ENCODE measurements at regions of chr13 and their contacts with region 1.

Region 1: GRCh38 chr13:75694722-75695121 is 58.6 kb downstream of the LMO7 start:
- DNase-seq: no peak
- H3K4me3 Mint-ChIP-seq: no peak overlapping the region
- H3K27ac Mint-ChIP-seq: no peak overlapping the region
- H3K4me1 Mint-ChIP-seq: peaks cover 2% of the 10 kb centered on the region
- H3K27me3 Mint-ChIP-seq: no peaks in the 10 kb centered on the region

Region 2: DNA sequence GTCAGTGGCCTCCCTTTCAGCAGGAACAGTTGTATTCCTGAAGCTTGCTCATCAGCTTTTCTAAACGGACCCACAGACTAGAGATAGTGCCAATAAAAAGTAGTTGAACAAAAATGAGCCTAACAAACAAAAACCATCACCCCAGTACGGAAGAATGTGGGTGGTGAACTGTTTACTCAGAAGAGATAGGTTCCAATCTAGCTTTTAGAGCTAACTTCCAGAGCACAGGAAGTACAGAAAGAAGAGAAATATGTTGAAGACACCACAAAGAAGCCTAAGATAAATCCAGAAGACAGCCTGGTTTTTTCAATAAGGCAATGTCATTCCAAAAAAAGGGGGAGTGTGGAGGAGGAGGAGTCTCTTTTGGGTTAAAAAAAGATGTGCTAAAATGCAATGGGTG is 61.4 kb before region 1 on chr13:
- CTCF ChIA-PET with region 1: no interaction called
- POLR2A ChIA-PET with region 1: no interaction called
- DNase-seq: no peak
- H3K4me3 Mint-ChIP-seq: no peak overlapping the region
- H3K27ac Mint-ChIP-seq: no peak overlapping the region
- H3K4me1 Mint-ChIP-seq: peaks cover 19% of the 10 kb centered on the region
- H3K27me3 Mint-ChIP-seq: peaks cover 15% of the 10 kb centered on the region

Region 3: GRCh38 chr13:75870397-75870903 is 175.7 kb after region 1 on chr13:
- CTCF ChIA-PET with region 1: interaction called, 11 read pairs
- POLR2A ChIA-PET with region 1: no interaction called
- DNase-seq: peak; percentile 16
- H3K4me3 Mint-ChIP-seq: peak overlapping the region; percentile 57
- H3K27ac Mint-ChIP-seq: peak overlapping the region; percentile 85
- H3K4me1 Mint-ChIP-seq: peaks cover 27% of the 10 kb centered on the region
- H3K27me3 Mint-ChIP-seq: peaks cover 2% of the 10 kb centered on the region